Activated B cell treated with CpG ODN at 0.5 μM for 24 hours (primary cell): ENCODE measurements at regions of chr12 and their contacts with region 1.

Region 1: DNA sequence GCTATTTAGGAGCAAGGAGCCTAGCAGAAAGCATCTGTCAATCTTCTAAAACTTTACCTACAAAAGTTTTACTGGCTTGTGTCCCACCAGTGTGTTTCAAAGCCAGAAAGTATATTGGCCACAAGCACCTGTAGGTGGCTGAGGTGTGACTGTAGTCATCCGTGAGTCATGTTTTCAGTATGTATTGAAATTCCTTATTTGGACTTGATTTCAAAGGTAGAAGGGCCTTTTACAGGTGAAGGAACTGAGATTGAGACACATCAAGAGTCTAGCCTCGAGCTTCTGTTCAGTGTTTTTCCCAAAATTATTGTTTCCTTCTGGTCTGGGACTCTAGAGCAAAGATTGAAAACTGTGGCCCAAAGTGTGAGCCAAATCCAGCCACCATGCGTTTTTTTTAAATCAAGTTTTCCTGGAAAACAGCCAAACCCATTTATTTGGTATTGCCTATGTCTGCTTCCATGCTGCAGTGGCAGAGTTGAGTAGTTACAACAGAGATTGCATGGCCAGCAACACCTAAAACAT is 195.3 kb upstream of the BCL2L14 start:
- DNase-seq: no peak
- ATAC-seq: no peak
- H3K4me3 Mint-ChIP-seq: no peak overlapping the region
- H3K27ac Mint-ChIP-seq: no peak overlapping the region
- H3K4me1 Mint-ChIP-seq: peaks cover 13% of the 10 kb centered on the region
- H3K27me3 Mint-ChIP-seq: no peaks in the 10 kb centered on the region
- CTCF ChIP-seq: no peak

Region 2: DNA sequence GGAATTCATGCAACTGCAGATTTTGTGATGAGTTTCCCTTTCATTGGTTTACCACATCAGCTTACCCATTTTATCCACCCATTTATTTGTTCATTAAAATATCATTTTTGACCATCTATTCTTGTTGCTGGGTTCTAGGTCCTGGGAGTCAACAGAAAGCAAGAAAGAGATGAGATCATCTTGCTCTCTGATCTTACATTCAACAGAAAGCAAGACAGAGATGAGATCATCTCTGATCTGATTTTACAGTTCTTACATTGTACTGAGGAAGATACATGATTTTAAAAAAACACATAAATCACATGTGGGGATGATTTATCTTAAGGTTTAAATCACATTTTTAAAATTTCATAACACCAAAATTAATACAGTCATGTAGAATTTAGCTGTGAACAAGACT is 815.7 kb before region 1 on chr12:
- CTCF ChIA-PET with region 1: no interaction called
- POLR2A ChIA-PET with region 1: no interaction called
- intact Hi-C with region 1: no loop called
- DNase-seq: no peak
- ATAC-seq: no peak
- H3K4me3 Mint-ChIP-seq: no peak overlapping the region
- H3K27ac Mint-ChIP-seq: no peak overlapping the region
- H3K4me1 Mint-ChIP-seq: no peaks in the 10 kb centered on the region
- H3K27me3 Mint-ChIP-seq: no peaks in the 10 kb centered on the region
- CTCF ChIP-seq: no peak

Region 3: GRCh38 chr12:11615481-11615880 is 260.0 kb before region 1 on chr12:
- CTCF ChIA-PET with region 1: no interaction called
- POLR2A ChIA-PET with region 1: interaction called, 16 read pairs
- intact Hi-C with region 1: no loop called
- DNase-seq: no peak
- ATAC-seq: no peak
- H3K4me3 Mint-ChIP-seq: no peak overlapping the region
- H3K27ac Mint-ChIP-seq: no peak overlapping the region
- H3K4me1 Mint-ChIP-seq: no peaks in the 10 kb centered on the region
- H3K27me3 Mint-ChIP-seq: no peaks in the 10 kb centered on the region
- CTCF ChIP-seq: no peak